CD8-positive, alpha-beta memory T cell (primary cell): ENCODE measurements at regions of chr13 and their contacts with region 1.

Region 1: DNA sequence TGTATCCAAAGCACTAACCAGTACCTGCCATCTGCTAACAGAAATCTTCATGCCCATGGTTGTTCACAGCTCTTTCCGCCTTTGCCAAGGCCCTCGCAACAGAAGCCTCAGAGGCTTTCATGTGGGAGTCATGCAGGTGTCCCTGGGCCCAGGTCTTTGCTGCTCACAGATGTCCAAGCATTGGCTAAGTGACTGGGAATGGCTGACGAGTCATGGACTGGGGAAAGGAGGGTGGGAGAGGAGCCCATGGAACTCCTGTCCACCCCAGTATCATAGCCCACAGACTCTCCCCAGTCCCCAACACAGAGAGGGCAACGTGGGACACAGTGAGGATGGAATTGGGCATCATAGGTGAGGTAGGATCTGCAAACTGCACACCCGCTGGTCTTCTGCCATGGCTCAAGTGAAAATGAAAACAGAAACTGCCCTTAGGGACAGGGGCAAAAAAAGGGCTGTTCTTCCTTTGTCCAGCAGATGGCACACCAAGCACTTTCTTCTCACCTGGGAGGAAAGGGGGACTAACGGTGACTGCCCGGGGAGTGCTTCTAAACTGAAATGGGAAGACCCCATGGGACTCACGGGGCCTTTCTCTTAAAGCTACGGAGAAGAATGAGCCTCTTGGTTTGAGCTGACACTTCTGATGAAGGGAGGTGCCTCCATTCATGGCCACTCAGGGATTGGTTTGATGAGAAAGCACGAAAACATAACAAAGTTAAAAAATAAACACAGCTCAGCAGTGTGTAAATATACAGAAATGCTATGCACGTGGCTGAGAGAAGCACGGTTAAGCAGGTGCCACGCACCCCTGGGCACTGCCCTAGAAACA is 11.1 kb upstream of the DHRS12 start:
- DNase-seq: peak; percentile 55 to 81 (median 73)
- H3K4me3 ChIP-seq: peak overlapping the region; percentile 30
- H3K4me3 Mint-ChIP-seq: peak overlapping the region in 6 of 7 donors; percentile 14 to 73 (median 63)
- H3K27ac ChIP-seq: no peak overlapping the region
- H3K27ac Mint-ChIP-seq: peak overlapping the region; percentile 60 to 94 (median 86)
- H3K4me1 ChIP-seq: peaks cover 62% of the 10 kb centered on the region
- H3K4me1 Mint-ChIP-seq: peaks cover 42 to 56% (median 48%) of the 10 kb centered on the region in 3 donors
- H3K27me3 ChIP-seq: no peaks in the 10 kb centered on the region
- H3K27me3 Mint-ChIP-seq: peaks cover 0 to 3% of the 10 kb centered on the region in 2 donors

Region 2: GRCh38 chr13:51452361-51453206 is 362.5 kb before region 1 on chr13 and contains the start of gene INTS6:
- CTCF ChIA-PET with region 1: interaction called, 11 read pairs
- POLR2A ChIA-PET with region 1: interaction called, 11 read pairs
- DNase-seq: peak; percentile 97 to 100 (median 99)
- H3K4me3 ChIP-seq: peak within 1 kb of the TSS; percentile 88
- H3K4me3 Mint-ChIP-seq: peak within 1 kb of the TSS; percentile 87 to 97 (median 95)
- H3K27ac ChIP-seq: peak within 1 kb of the TSS; percentile 90
- H3K27ac Mint-ChIP-seq: peak within 1 kb of the TSS; percentile 89 to 99 (median 97)
- H3K4me1 ChIP-seq: peaks cover 44% of the 10 kb centered on the region
- H3K4me1 Mint-ChIP-seq: peaks cover 52 to 70% (median 63%) of the 10 kb centered on the region in 3 donors
- H3K27me3 ChIP-seq: no peaks in the 10 kb centered on the region
- H3K27me3 Mint-ChIP-seq: peaks cover 0 to 8% of the 10 kb centered on the region in 2 donors
- total RNA-seq, gene INTS6: 56.6 to 58.2 TPM

Region 3: GRCh38 chr13:51803422-51804294 is 11.4 kb before region 1 on chr13 and contains the start of gene DHRS12:
- CTCF ChIA-PET with region 1: interaction called, 18 read pairs
- POLR2A ChIA-PET with region 1: interaction called, 4 read pairs
- DNase-seq: peak; percentile 81 to 94 (median 93)
- H3K4me3 ChIP-seq: peak within 1 kb of the TSS; percentile 68
- H3K4me3 Mint-ChIP-seq: peak within 1 kb of the TSS; percentile 91 to 99 (median 95)
- H3K27ac ChIP-seq: peak within 1 kb of the TSS; percentile 99
- H3K27ac Mint-ChIP-seq: peak within 1 kb of the TSS; percentile 98 to 100 (median 100)
- H3K4me1 ChIP-seq: peaks cover 39% of the 10 kb centered on the region
- H3K4me1 Mint-ChIP-seq: peaks cover 46 to 61% (median 50%) of the 10 kb centered on the region in 3 donors
- H3K27me3 ChIP-seq: no peaks in the 10 kb centered on the region
- H3K27me3 Mint-ChIP-seq: peaks cover 0 to 8% of the 10 kb centered on the region in 2 donors
- total RNA-seq, gene DHRS12: 7.1 to 7.2 TPM

Region 4: DNA sequence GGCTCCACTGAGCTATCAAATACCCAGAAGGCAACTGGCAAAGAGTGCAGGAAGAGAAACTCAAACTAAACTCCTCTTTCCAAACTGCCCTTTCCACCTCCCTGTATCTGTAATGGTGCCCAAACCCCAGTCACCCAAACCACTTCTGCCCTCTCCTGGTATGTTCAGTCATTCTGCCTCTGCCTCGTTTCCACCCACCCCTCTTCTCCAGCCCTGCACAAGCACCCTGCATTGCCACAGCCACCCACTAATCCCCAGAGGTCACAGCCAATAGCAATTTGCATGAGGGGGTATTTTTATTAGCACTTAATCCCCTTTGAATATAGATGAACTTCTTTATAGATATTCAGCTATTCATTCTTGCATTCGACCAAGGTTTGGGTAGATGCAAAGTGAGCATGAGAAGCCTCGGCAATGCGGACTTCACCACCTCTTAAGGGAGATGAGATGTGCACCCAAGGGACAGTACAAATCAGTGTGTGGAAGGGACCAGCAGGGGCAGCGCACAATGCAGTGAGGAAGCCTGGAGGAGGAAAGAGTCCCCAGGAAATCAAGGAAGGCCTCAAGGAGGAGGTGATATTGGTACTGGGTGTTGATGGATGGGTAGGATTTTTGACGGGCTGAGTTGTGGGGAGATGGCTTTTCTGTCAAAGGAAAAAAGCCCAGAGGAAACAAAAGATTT is 17.6 kb after region 1 on chr13:
- CTCF ChIA-PET with region 1: interaction called, 188 read pairs
- POLR2A ChIA-PET with region 1: interaction called, 7 read pairs
- DNase-seq: peak; percentile 26 to 75 (median 60)
- H3K4me3 ChIP-seq: no peak overlapping the region
- H3K4me3 Mint-ChIP-seq: peak overlapping the region in 1 of 7 donors; percentile 24
- H3K27ac ChIP-seq: no peak overlapping the region
- H3K27ac Mint-ChIP-seq: peak overlapping the region in 5 of 8 donors; percentile 0 to 74 (median 38)
- H3K4me1 ChIP-seq: peaks cover 36% of the 10 kb centered on the region
- H3K4me1 Mint-ChIP-seq: peaks cover 17 to 39% (median 32%) of the 10 kb centered on the region in 3 donors
- H3K27me3 ChIP-seq: no peaks in the 10 kb centered on the region
- H3K27me3 Mint-ChIP-seq: no peaks in the 10 kb centered on the region

Region 5: DNA sequence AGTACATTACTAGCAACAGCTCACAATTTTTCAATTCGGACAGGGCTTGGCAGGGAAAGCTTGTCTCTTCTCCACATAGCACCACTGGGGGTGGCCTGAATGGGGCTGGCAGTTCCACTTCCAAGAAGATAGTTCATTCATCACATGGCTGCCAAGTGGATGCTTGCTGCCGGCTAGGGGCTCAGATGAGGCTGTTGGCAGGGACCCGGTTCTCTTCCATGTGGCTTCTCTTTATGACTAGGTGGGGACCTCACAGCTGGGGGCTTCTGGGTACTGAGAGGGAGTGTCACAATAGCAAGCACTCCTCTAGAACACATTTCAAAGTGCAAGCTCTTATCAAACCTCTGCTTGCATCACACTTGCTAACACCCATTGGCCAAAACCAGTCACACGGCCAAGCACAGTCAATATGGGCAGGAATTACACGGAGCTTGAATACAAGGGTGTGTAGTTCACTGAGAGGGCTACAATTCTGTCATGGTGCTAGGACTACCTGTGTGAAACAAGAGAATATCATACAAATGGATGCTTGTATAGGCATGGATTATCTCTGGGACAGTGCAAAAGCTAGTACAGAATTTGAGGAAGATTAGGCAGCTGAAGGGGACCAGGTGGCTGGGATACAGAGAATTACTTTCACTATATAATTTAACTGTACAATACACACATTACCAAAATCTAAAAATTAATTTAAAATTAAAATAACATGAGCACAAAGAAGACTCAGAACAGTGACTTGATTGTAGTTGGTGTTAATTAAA is 163.9 kb after region 1 on chr13:
- CTCF ChIA-PET with region 1: no interaction called
- POLR2A ChIA-PET with region 1: no interaction called
- DNase-seq: no peak
- H3K4me3 ChIP-seq: no peak overlapping the region
- H3K4me3 Mint-ChIP-seq: no peak overlapping the region
- H3K27ac ChIP-seq: no peak overlapping the region
- H3K27ac Mint-ChIP-seq: peak overlapping the region in 1 of 8 donors; percentile 60
- H3K4me1 ChIP-seq: no peaks in the 10 kb centered on the region
- H3K4me1 Mint-ChIP-seq: no peaks in the 10 kb centered on the region
- H3K27me3 ChIP-seq: no peaks in the 10 kb centered on the region
- H3K27me3 Mint-ChIP-seq: peaks cover 3 to 16% of the 10 kb centered on the region in 2 donors

Region 6: GRCh38 chr13:52128714-52129700 is 314.0 kb after region 1 on chr13 and contains the start of gene NEK5:
- CTCF ChIA-PET with region 1: interaction called, 21 read pairs
- POLR2A ChIA-PET with region 1: no interaction called
- DNase-seq: peak; percentile 24 to 66 (median 50)
- H3K4me3 ChIP-seq: peak within 1 kb of the TSS; percentile 48
- H3K4me3 Mint-ChIP-seq: peak within 1 kb of the TSS; percentile 78 to 90 (median 84)
- H3K27ac ChIP-seq: no peak within 1 kb of the TSS
- H3K27ac Mint-ChIP-seq: peak within 1 kb of the TSS in 4 of 8 donors; percentile 1 to 35 (median 10)
- H3K4me1 ChIP-seq: peaks cover 18% of the 10 kb centered on the region
- H3K4me1 Mint-ChIP-seq: peaks cover 11 to 17% (median 13%) of the 10 kb centered on the region in 3 donors
- H3K27me3 ChIP-seq: no peaks in the 10 kb centered on the region
- H3K27me3 Mint-ChIP-seq: peaks cover 9 to 21% of the 10 kb centered on the region in 2 donors
- total RNA-seq, gene NEK5: not detected